ENCODE measurements at regions of chr6 and their contacts with region 1.

Region 1: DNA sequence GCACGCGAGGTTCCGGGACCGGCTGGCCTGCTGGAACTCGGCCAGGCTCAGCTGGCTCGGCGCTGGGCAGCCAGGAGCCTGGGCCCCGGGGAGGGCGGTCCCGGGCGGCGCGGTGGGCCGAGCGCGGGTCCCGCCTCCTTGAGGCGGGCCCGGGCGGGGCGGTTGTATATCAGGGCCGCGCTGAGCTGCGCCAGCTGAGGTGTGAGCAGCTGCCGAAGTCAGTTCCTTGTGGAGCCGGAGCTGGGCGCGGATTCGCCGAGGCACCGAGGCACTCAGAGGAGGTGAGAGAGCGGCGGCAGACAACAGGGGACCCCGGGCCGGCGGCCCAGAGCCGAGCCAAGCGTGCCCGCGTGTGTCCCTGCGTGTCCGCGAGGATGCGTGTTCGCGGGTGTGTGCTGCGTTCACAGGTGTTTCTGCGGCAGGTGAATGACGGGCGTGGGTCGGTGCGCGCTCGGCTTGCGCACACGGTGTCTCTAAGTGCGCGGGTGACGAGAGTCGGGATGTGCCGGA is at the start of gene CDKN1A:
- DNase-seq: peak; percentile 92
- ATAC-seq: peak; percentile 51
- H3K4me3 ChIP-seq: peak within 1 kb of the TSS; percentile 55 to 98 (median 71)
- H3K4me3 Mint-ChIP-seq: peak within 1 kb of the TSS; percentile 99
- H3K27ac ChIP-seq: peak within 1 kb of the TSS; percentile 97 to 100
- H3K27ac Mint-ChIP-seq: peak within 1 kb of the TSS; percentile 88
- H3K4me1 ChIP-seq: peaks cover 33 to 48% of the 10 kb centered on the region in 2 donors
- H3K4me1 Mint-ChIP-seq: peaks cover 41% of the 10 kb centered on the region
- H3K27me3 ChIP-seq: no peaks in the 10 kb centered on the region
- H3K27me3 Mint-ChIP-seq: no peaks in the 10 kb centered on the region
- CTCF ChIP-seq: no peak
- total RNA-seq, gene CDKN1A: 45.5 and 47.2 TPM in 2 replicates

Region 2: GRCh38 chr6:36423101-36423824 is 255.3 kb before region 1 on chr6:
- CTCF ChIA-PET with region 1: interaction called, 3 read pairs
- POLR2A ChIA-PET with region 1: no interaction called
- intact Hi-C with region 1: loop called (anchors 1 kb)
- DNase-seq: peak; percentile 98
- ATAC-seq: peak; percentile 96
- H3K4me3 ChIP-seq: peak overlapping the region; percentile 68 to 81 (median 76)
- H3K4me3 Mint-ChIP-seq: peak overlapping the region; percentile 97
- H3K27ac ChIP-seq: peak overlapping the region; percentile 57 to 68
- H3K27ac Mint-ChIP-seq: peak overlapping the region; percentile 94
- H3K4me1 ChIP-seq: peaks cover 9 to 14% of the 10 kb centered on the region in 2 donors
- H3K4me1 Mint-ChIP-seq: peaks cover 17% of the 10 kb centered on the region
- H3K27me3 ChIP-seq: no peaks in the 10 kb centered on the region
- H3K27me3 Mint-ChIP-seq: no peaks in the 10 kb centered on the region
- CTCF ChIP-seq: peak; percentile 69

Region 3: DNA sequence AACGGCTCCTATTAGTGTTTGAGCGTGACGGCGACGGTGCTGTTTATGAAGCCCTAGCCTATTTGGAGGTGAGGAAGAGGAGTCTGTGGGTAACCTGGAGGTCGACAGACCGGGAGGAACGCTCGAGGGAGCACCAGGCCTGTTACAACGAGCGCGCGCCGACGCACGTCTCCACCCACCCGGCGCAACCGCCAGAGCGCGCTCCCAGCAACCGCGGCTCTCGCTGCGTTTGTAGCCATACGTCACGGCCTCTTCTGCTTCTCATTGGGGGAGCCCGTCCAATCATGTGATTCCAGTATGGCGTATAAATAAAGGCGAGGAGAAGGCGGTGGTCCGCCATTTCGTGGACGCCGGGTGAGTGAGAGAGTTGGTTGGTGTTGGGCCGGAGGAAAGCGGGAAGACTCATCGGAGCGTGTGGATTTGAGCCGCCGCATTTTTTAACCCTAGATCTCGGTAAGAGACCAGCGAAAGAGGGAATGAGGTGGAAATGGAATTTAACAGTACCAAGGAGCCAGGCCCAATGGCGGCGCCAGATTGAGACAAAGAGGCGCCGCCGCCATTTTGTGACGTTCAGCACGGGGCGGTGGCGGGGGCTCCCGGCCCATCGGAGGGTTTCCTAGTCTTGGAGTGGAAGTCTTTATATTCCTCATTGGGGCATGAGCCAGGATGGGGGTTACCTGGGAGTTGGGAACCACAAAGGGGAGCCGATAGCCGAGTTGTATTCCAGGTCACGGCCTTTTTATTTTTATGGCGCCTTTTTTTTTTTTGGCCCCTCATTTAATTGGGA is 84.4 kb before region 1 on chr6 and contains the start of gene SRSF3:
- CTCF ChIA-PET with region 1: interaction called, 3 read pairs
- POLR2A ChIA-PET with region 1: interaction called, 3 read pairs
- intact Hi-C with region 1: loop called (anchors 1 kb)
- DNase-seq: peak; percentile 99
- ATAC-seq: peak; percentile 91
- H3K4me3 ChIP-seq: peak within 1 kb of the TSS; percentile 91 to 100 (median 97)
- H3K4me3 Mint-ChIP-seq: peak within 1 kb of the TSS; percentile 90
- H3K27ac ChIP-seq: peak within 1 kb of the TSS; percentile 93 to 99
- H3K27ac Mint-ChIP-seq: peak within 1 kb of the TSS; percentile 97
- H3K4me1 ChIP-seq: peaks cover 44 to 55% of the 10 kb centered on the region in 2 donors
- H3K4me1 Mint-ChIP-seq: peaks cover 48% of the 10 kb centered on the region
- H3K27me3 ChIP-seq: no peaks in the 10 kb centered on the region
- H3K27me3 Mint-ChIP-seq: no peaks in the 10 kb centered on the region
- CTCF ChIP-seq: peak; percentile 29
- total RNA-seq, gene SRSF3: 316 and 331 TPM in 2 replicates

Region 4: DNA sequence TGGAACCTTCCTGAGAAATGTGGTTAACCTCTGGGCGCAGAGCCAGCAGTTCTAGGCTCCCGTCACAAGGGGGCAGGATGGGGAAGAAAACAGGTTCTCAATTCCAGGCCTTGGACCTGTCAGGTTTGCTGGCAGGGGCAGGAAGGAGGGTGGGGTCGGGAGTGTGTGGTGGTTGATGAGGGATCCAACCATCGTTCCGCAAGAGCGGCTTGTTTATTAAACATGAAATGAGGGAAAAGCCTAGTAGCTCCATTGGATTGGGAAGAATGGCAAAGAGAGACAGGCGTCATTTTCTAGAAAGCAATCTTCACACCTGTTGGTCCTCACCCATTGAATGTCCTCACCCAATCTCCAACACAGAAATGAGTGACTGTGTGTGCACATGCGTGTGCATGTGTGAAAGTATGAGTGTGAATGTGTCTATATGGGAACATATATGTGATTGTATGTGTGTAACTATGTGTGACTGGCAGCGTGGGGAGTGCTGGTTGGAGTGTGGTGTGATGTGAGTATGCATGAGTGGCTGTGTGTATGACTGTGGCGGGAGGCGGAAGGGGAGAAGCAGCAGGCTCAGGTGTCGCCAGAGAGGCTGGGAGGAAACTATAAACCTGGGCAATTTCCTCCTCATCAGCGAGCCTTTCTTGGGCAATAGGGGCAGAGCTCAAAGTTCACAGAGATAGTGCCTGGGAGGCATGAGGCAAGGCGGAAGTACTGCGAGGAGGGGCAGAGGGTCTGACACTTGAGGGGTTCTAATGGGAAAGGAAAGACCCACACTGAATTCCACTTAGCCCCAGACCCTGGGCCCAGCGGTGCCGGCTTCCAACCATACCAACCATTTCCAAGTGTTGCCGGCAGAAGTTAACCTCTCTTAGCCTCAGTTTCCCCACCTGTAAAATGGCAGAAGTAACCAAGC is 54.8 kb before region 1 on chr6:
- CTCF ChIA-PET with region 1: interaction called, 26 read pairs
- POLR2A ChIA-PET with region 1: interaction called, 4 read pairs
- intact Hi-C with region 1: loop called (anchors 1 kb)
- DNase-seq: peak; percentile 87
- ATAC-seq: peak; percentile 93
- H3K4me3 ChIP-seq: no peak overlapping the region
- H3K4me3 Mint-ChIP-seq: peak overlapping the region; percentile 55
- H3K27ac ChIP-seq: no peak overlapping the region
- H3K27ac Mint-ChIP-seq: peak overlapping the region; percentile 79
- H3K4me1 ChIP-seq: peaks cover 21 to 33% of the 10 kb centered on the region in 2 donors
- H3K4me1 Mint-ChIP-seq: peaks cover 34% of the 10 kb centered on the region
- H3K27me3 ChIP-seq: no peaks in the 10 kb centered on the region
- H3K27me3 Mint-ChIP-seq: no peaks in the 10 kb centered on the region
- CTCF ChIP-seq: peak; percentile 92

Region 5: DNA sequence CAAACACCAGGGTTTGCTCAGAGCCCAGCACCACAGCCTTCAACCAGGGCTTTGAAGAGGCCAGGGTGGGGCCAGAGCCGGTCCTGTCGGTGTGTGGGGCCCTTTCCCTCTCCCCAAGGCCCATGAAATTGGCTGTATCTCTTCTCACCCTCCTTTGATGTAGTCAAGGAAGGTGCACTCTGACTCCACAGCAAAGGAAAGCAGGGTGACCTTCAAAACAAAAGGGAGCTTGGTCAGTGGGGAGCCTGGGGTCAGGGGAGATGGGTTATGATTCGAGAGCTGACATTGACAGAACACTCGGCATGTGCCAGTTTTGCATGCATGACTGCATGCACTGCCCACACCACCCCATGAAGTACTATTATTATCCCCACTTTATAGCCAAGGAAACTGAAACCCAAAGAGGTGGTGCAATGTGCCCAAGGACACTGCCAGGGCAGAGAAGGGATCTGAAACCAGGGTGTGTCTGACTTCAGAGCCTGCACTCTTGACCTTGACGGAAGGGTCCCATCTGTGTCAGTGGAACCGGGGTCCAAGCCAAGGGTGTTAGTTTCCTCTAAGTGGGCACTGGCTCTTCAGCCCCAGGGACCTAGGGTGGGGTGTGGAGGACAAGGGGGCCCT is 74.4 kb after region 1 on chr6:
- CTCF ChIA-PET with region 1: interaction called, 107 read pairs
- POLR2A ChIA-PET with region 1: interaction called, 28 read pairs
- intact Hi-C with region 1: loop called (anchors 1 kb)
- DNase-seq: peak; percentile 80
- ATAC-seq: peak; percentile 66
- H3K4me3 ChIP-seq: peak overlapping the region in 4 of 5 experiments; percentile 7 to 91 (median 34)
- H3K4me3 Mint-ChIP-seq: peak overlapping the region; percentile 86
- H3K27ac ChIP-seq: peak overlapping the region; percentile 91 to 95
- H3K27ac Mint-ChIP-seq: peak overlapping the region; percentile 85
- H3K4me1 ChIP-seq: peaks cover 77 to 88% of the 10 kb centered on the region in 2 donors
- H3K4me1 Mint-ChIP-seq: peaks cover 89% of the 10 kb centered on the region
- H3K27me3 ChIP-seq: no peaks in the 10 kb centered on the region
- H3K27me3 Mint-ChIP-seq: no peaks in the 10 kb centered on the region
- CTCF ChIP-seq: no peak

Region 6: GRCh38 chr6:37005061-37005810 is 326.7 kb after region 1 on chr6 and contains the start of gene FGD2:
- CTCF ChIA-PET with region 1: no interaction called
- POLR2A ChIA-PET with region 1: no interaction called
- intact Hi-C with region 1: loop called (anchors 2 kb)
- DNase-seq: peak; percentile 89
- ATAC-seq: peak; percentile 72
- H3K4me3 ChIP-seq: peak within 1 kb of the TSS; percentile 82 to 97 (median 89)
- H3K4me3 Mint-ChIP-seq: peak within 1 kb of the TSS; percentile 96
- H3K27ac ChIP-seq: peak within 1 kb of the TSS; percentile 80 to 92
- H3K27ac Mint-ChIP-seq: peak within 1 kb of the TSS; percentile 95
- H3K4me1 ChIP-seq: peaks cover 56 to 79% of the 10 kb centered on the region in 2 donors
- H3K4me1 Mint-ChIP-seq: peaks cover 82% of the 10 kb centered on the region
- H3K27me3 ChIP-seq: no peaks in the 10 kb centered on the region
- H3K27me3 Mint-ChIP-seq: no peaks in the 10 kb centered on the region
- CTCF ChIP-seq: no peak
- total RNA-seq, gene FGD2: 352 and 360 TPM in 2 replicates

Measured in B cell (primary cell).